Posterior vena cava (tissue), 2 donors: ENCODE measurements at regions of chr7 and their contacts with region 1.

Region 1: GRCh38 chr7:44784364-44784763 is 12.1 kb upstream of the PPIA start:
- DNase-seq: no peak

Region 2: DNA sequence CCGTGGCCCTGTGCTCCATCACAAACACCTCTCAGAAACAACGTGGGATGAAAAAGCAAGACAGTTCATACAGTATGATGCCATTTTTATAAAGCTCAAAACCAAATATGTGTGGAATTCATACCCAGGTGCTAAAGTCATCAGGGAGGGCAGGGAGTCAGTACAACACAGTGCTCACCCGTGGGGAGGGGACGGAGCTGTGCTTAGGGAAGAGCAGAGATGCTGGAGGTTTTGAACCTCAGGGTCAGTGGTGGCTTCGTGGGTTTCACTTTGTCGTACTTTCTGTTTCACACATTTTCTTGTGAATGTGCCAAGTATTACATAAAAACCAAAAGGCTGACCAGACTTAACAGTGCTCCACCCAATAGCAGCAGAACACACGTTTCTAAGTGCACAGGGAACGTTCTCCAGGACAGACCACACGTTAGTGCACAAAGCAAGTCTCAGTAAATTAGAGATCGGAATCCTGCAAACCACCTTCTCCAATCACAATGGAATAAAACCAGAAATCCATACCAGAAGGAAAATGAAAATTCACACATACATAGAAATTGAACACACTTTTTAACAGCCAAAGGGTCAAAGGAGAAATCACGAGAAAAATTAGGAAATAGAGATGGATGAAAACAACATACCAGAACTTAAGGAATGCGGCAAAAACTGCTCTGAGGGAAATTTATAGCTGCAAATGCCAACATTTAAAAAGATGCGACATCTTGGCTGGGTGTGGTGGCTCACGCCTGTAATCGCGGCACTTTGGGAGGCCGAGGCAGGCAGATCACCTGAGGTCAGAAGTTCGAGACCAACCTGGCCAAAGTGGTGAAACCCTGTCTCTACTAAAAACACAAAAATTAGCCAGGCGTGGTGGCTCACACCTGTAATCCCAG is 14.3 kb before region 1 on chr7:
- intact Hi-C with region 1: loop called in 1 of 2 experiments (anchors 1 kb)
- DNase-seq: no peak

Region 3: DNA sequence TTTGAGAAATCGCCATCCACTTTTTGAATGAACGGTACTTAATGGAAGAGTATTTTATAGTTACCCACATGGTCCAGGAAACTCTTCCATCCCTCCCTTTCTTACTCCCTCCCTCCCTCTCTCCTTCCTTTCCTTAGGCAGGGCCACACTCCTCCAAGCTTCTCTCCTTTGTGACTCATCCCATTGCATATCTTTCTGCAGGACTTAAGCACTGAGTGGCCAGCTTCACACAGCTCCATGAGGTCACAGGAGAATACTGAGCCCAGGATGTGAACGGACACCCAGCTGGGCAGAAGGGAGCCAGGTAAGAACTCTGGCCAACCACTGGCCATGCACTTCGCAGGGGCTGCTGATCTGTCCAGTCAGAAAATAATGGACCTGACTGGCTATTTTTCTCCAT is 600.1 kb after region 1 on chr7:
- intact Hi-C with region 1: no loop called
- DNase-seq: no peak